ENCODE measurements at regions of chr7 and their contacts with region 1.

Region 1: GRCh38 chr7:100483101-100483721 is 516 bp upstream of the NYAP1 start:
- DNase-seq: peak; percentile 86
- ATAC-seq: peak; percentile 50

Region 2: GRCh38 chr7:100221231-100221718 is 261.9 kb before region 1 on chr7:
- intact Hi-C with region 1: no loop called
- DNase-seq: no peak
- ATAC-seq: no peak

Region 3: GRCh38 chr7:100545360-100546128 is 62.3 kb after region 1 on chr7:
- intact Hi-C with region 1: loop called (anchors 5 kb)
- DNase-seq: no peak
- ATAC-seq: peak; percentile 83

Measured in left ventricle myocardium superior (tissue), 1 donor.